HepG2 (cell line): ENCODE measurements at regions of chr15 and their contacts with region 1.

Region 1: GRCh38 chr15:69031013-69032001 is 16.8 kb downstream of the NOX5 start:
- DNase-seq: no peak
- ATAC-seq: peak; percentile 82
- H3K4me3 ChIP-seq: peak overlapping the region in 1 of 3 experiments; percentile 57; a peak in 2 of 6 replicates
- H3K27ac ChIP-seq: no peak overlapping the region
- H3K4me1 ChIP-seq: peaks cover 11% of the 10 kb centered on the region
- H3K27me3 ChIP-seq: peaks cover 1 to 3% of the 10 kb centered on the region in 2 experiments; a peak in 2 of 5 replicates
- CTCF ChIP-seq: peak; percentile 92
- EP300 ChIP-seq: no peak
- POLR2A ChIP-seq: no peak
- RAD21 ChIP-seq: 0 out of 2 replicates have a peak, but pooled peaks have one; percentile 32

Region 2: GRCh38 chr15:68749793-68750192 is 281.5 kb before region 1 on chr15:
- CTCF ChIA-PET with region 1: no interaction called
- POLR2A ChIA-PET with region 1: no interaction called
- in situ Hi-C with region 1: no loop called
- intact Hi-C with region 1: loop called (anchors 5 kb)
- DNase-seq: no peak
- ATAC-seq: no peak
- H3K4me3 ChIP-seq: no peak overlapping the region
- H3K27ac ChIP-seq: no peak overlapping the region
- H3K4me1 ChIP-seq: no peaks in the 10 kb centered on the region
- H3K27me3 ChIP-seq: peaks cover 0 to under 1% of the 10 kb centered on the region in 2 experiments; a peak in 1 of 5 replicates
- CTCF ChIP-seq: no peak
- EP300 ChIP-seq: no peak
- POLR2A ChIP-seq: no peak
- RAD21 ChIP-seq: no peak